ENCODE measurements at regions of chr20 and their contacts with region 1.

Region 1: GRCh38 chr20:45436732-45437391 is 20.9 kb downstream of the PIGT start:
- DNase-seq: peak; percentile 97
- H3K27ac ChIP-seq: peak overlapping the region; percentile 51
- CTCF ChIP-seq: peak; percentile 99

Region 2: GRCh38 chr20:44832724-44833123 is 604.1 kb before region 1 on chr20:
- CTCF ChIA-PET with region 1: no interaction called
- POLR2A ChIA-PET with region 1: no interaction called
- DNase-seq: peak; percentile 54
- H3K27ac ChIP-seq: no peak overlapping the region
- CTCF ChIP-seq: no peak

Region 3: GRCh38 chr20:45266977-45267376 is 169.9 kb before region 1 on chr20:
- CTCF ChIA-PET with region 1: no interaction called
- POLR2A ChIA-PET with region 1: no interaction called
- DNase-seq: no peak
- H3K27ac ChIP-seq: no peak overlapping the region
- CTCF ChIP-seq: no peak

Region 4: GRCh38 chr20:45311589-45312211 is 125.2 kb before region 1 on chr20:
- CTCF ChIA-PET with region 1: interaction called, 10 read pairs
- POLR2A ChIA-PET with region 1: no interaction called
- DNase-seq: peak; percentile 79
- H3K27ac ChIP-seq: no peak overlapping the region
- CTCF ChIP-seq: peak; percentile 98

Region 5: GRCh38 chr20:45336530-45337366 is 100.1 kb before region 1 on chr20:
- CTCF ChIA-PET with region 1: interaction called, 12 read pairs
- POLR2A ChIA-PET with region 1: no interaction called
- DNase-seq: peak; percentile 96
- H3K27ac ChIP-seq: peak overlapping the region; percentile 97
- CTCF ChIP-seq: no peak

Region 6: GRCh38 chr20:45373353-45374100 is 63.3 kb before region 1 on chr20:
- CTCF ChIA-PET with region 1: interaction called, 62 read pairs
- POLR2A ChIA-PET with region 1: interaction called, 3 read pairs
- DNase-seq: peak; percentile 93
- H3K27ac ChIP-seq: peak overlapping the region; percentile 51
- CTCF ChIP-seq: peak; percentile 98

Region 7: DNA sequence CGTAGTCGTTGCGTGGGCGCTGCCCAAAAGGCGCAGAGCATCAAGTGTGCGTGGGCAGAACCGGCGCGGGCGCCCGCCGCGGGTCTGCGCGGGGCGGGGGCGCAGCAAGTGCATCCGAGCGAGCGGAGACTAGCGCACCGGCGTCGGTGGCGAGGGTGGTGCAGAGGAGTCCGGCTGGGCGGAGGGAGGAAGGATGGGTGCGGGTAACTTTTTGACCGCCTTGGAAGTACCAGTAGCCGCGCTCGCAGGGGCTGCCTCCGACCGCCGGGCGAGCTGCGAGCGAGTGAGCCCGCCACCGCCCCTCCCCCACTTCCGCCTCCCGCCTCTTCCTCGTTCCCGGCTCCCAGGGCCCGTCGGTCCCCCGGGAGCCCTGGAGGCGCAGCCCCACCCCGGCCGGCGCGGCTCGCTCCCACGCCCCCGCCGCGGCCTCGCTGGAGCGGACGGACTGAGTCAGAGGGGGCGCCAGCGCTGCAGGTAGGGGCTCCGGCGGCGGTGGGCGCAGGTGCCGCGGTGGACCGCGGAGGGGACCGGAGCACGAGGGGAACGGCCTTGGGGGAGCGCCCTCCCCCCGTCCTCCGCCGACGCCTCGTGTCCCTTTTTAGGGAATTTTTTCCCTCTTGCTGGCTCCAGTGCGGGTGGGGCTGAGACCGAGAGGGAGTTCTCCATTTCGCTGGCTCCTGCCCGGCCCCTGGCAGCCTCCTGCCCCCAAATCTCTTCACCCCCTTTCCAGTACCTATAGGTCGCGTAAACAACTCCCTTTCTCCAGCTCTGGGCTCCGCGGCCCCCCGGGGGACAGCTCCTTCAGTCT is 30.4 kb before region 1 on chr20:
- CTCF ChIA-PET with region 1: interaction called, 14 read pairs
- POLR2A ChIA-PET with region 1: no interaction called
- DNase-seq: peak; percentile 77
- H3K27ac ChIP-seq: peak overlapping the region; percentile 74
- CTCF ChIP-seq: no peak

Region 8: DNA sequence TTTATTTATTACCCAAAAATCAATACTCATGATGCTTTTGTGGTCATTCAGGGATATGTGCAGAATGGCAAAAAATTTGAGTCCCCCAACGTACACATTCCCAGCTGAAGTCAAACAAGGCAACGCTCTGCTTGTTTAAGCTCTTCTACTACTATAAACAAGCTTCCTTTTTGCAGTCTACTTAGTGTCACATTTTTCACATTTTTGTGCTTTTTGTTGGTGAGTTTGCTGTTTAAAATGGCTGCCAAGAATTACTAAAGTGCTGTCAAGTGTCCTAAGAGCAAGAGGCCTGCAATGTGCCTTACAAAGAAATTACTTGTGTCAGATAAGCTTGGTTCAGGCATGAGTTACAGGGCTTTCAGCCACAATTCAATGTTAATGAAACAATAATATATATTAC is 140.1 kb after region 1 on chr20:
- CTCF ChIA-PET with region 1: no interaction called
- POLR2A ChIA-PET with region 1: no interaction called
- DNase-seq: no peak
- H3K27ac ChIP-seq: no peak overlapping the region
- CTCF ChIP-seq: no peak